Activated naive CD4-positive, alpha-beta T cell treated with anti-CD3 and anti-CD28 coated beads, Interleukin-2, amount 10 ng/mL, durations not matched to agents 7 days and 5 days (primary cell): ENCODE measurements at regions of chr2 and their contacts with region 1.

Region 1: GRCh38 chr2:135797497-135798274 is 39.3 kb downstream of the LCT start:
- DNase-seq: peak; percentile 86
- H3K4me3 Mint-ChIP-seq: no peak overlapping the region
- H3K27ac Mint-ChIP-seq: no peak overlapping the region
- H3K4me1 Mint-ChIP-seq: peaks cover 14% of the 10 kb centered on the region
- H3K27me3 Mint-ChIP-seq: peaks cover 8% of the 10 kb centered on the region

Region 2: DNA sequence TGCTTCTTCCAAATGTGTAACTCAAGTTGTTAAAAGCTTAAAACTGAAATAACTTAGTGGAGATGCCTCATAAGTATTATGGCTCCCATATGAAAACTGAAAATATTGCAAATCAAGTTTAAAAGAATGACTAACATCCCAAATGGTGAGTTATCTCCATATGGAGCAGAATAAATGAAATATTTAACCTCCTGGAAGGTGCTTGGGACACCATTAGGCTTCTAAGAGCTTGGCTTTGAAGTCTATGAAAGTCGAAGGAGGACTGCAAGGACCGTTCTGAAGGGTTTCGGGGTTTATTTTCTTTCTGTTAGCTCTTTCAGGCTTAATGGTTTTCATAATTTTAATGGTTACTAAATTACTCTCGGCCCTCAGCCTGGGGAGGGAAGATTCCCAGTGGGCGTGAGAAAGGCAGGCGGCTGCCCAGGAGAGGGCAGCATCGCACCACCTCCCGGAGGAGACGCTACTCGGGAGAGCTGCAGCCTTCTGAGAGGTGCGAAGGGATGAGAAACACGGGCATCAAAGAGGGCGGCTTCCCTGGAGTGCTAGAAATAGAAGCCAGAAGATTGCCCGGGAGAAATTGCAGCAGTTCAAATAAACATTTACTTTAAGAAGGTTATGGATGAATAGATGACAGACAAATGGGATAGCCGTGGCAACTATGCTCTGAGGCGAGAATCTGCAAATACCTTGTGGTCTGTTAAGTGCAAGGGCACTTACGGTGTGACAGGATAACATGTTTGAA is 793.5 kb before region 1 on chr2:
- CTCF ChIA-PET with region 1: interaction called, 14 read pairs
- DNase-seq: peak; percentile 77
- H3K4me3 Mint-ChIP-seq: no peak overlapping the region
- H3K27ac Mint-ChIP-seq: no peak overlapping the region
- H3K4me1 Mint-ChIP-seq: peaks cover 3% of the 10 kb centered on the region
- H3K27me3 Mint-ChIP-seq: peaks cover 14% of the 10 kb centered on the region

Region 3: DNA sequence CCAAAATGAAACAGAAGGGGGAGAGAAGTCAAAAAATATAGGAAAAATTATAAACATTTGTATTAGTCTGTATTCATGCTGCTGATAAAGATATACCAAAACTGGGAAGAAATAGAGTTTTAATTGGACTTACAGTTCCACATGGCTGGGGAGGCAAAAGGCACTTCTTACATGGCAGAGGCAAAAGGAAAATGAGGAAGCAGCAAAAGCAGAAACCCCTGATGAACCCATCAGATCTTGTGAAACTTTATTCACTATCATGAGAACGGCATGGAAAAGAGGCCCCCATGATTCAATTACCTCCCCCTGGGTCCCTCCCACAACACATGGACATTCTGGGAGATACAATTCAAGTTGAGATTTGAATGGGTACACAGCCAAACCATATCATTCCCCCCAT is 345.7 kb before region 1 on chr2:
- CTCF ChIA-PET with region 1: no interaction called
- DNase-seq: no peak
- H3K4me3 Mint-ChIP-seq: no peak overlapping the region
- H3K27ac Mint-ChIP-seq: no peak overlapping the region
- H3K4me1 Mint-ChIP-seq: no peaks in the 10 kb centered on the region
- H3K27me3 Mint-ChIP-seq: no peaks in the 10 kb centered on the region

Region 4: DNA sequence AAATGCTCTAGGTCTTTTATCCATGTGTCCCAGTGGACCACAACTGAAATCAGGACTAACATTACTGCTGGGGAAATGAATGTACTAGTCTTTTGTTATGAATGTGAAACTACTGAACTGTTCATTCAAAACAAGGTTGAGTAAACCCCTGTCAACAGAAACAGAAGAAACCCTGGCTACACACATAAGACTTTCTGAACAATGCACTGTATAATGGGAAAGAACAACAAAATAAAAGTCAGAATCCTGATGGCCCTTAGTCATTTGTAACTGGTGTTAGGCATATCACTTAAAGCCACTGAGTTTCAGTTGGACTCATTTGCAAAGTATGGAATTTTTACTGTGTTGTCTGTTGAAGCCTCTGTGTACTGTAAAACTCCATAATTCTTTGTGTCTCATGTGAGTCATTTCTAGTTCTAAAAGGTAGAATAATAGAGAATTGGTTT is 133.0 kb before region 1 on chr2:
- CTCF ChIA-PET with region 1: no interaction called
- DNase-seq: no peak
- H3K4me3 Mint-ChIP-seq: no peak overlapping the region
- H3K27ac Mint-ChIP-seq: no peak overlapping the region
- H3K4me1 Mint-ChIP-seq: peaks cover 23% of the 10 kb centered on the region
- H3K27me3 Mint-ChIP-seq: no peaks in the 10 kb centered on the region

Region 5: GRCh38 chr2:135709992-135710391 is 87.7 kb before region 1 on chr2:
- CTCF ChIA-PET with region 1: interaction called, 15 read pairs
- DNase-seq: peak; percentile 79
- H3K4me3 Mint-ChIP-seq: no peak overlapping the region
- H3K27ac Mint-ChIP-seq: no peak overlapping the region
- H3K4me1 Mint-ChIP-seq: no peaks in the 10 kb centered on the region
- H3K27me3 Mint-ChIP-seq: no peaks in the 10 kb centered on the region

Region 6: GRCh38 chr2:135812907-135813502 is 15.3 kb after region 1 on chr2:
- CTCF ChIA-PET with region 1: interaction called, 21 read pairs
- DNase-seq: no peak
- H3K4me3 Mint-ChIP-seq: no peak overlapping the region
- H3K27ac Mint-ChIP-seq: no peak overlapping the region
- H3K4me1 Mint-ChIP-seq: no peaks in the 10 kb centered on the region
- H3K27me3 Mint-ChIP-seq: peaks cover 6% of the 10 kb centered on the region

Region 7: GRCh38 chr2:135849087-135849486 is 51.4 kb after region 1 on chr2:
- CTCF ChIA-PET with region 1: no interaction called
- DNase-seq: no peak
- H3K4me3 Mint-ChIP-seq: no peak overlapping the region
- H3K27ac Mint-ChIP-seq: no peak overlapping the region
- H3K4me1 Mint-ChIP-seq: no peaks in the 10 kb centered on the region
- H3K27me3 Mint-ChIP-seq: no peaks in the 10 kb centered on the region

Region 8: GRCh38 chr2:136384531-136385303 is 587.0 kb after region 1 on chr2:
- CTCF ChIA-PET with region 1: interaction called, 19 read pairs
- DNase-seq: peak; percentile 69
- H3K4me3 Mint-ChIP-seq: no peak overlapping the region
- H3K27ac Mint-ChIP-seq: peak overlapping the region; percentile 90
- H3K4me1 Mint-ChIP-seq: peaks cover 47% of the 10 kb centered on the region
- H3K27me3 Mint-ChIP-seq: no peaks in the 10 kb centered on the region